Esophagus squamous epithelium (tissue), 5 donors: ENCODE measurements at regions of chr22 and their contacts with region 1.

Region 1: GRCh38 chr22:50371101-50371648 is 28.0 kb downstream of the PPP6R2 start:
- DNase-seq: no peak
- H3K4me3 ChIP-seq: no peak overlapping the region
- H3K27ac ChIP-seq: no peak overlapping the region
- H3K4me1 ChIP-seq: peaks cover 0 to 15% (median 0%) of the 10 kb centered on the region in 3 donors
- H3K27me3 ChIP-seq: no peaks in the 10 kb centered on the region
- CTCF ChIP-seq: no peak
- POLR2A ChIP-seq: no peak

Region 2: DNA sequence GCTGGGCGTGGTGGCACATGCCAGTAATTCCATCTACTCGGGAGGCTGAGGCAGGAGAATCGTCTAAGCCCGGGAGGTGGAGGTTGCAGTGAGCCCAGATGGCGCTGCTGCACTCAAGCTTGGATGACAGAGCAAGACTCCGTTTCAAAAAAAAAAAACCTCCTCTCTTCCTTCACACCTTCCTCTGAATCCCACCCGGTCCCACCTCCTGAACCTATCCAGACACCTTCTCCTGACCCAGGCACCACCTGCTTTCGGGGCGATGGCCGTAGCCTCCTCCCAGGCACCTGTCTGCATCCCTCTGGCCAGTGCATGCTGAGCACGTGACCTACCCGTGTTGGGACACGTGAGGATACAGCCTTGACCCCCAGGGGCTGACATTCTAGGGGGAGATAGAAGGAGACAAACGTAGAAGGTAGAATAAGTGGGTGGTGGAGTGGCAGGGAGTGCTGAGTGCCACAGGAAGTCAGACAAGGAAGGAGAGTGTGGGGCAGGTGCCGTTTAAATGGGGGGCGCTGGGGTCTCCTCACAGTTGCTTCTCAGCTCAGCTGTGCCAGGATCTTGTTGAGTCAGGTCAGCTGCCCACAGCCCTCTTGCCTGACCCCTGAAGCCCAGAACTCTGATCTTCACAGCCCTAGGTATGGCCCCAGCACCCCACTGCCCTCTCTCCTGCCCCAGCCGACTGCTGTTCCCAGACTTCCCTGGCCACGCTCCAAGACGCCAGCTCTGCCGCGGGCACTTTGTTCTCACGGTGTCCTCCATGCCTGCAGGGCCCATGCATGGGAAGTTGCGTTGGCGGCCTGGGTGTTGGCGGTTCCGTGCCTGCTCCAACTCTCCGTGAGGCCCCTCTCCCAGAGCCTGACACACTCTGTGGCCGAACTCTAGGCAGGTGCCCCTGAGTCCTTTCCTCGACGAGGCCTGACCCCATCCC is 114.3 kb after region 1 on chr22:
- intact Hi-C with region 1: loop called (anchors 5 kb)
- DNase-seq: no peak
- H3K4me3 ChIP-seq: no peak overlapping the region
- H3K27ac ChIP-seq: no peak overlapping the region
- H3K4me1 ChIP-seq: peaks cover 5 to 21% (median 7%) of the 10 kb centered on the region in 3 donors
- H3K27me3 ChIP-seq: peaks cover 0 to 95% (median 6%) of the 10 kb centered on the region in 4 donors
- CTCF ChIP-seq: no peak
- POLR2A ChIP-seq: no peak